H1 (cell line): ENCODE measurements at regions of chr1 and their contacts with region 1.

Region 1: DNA sequence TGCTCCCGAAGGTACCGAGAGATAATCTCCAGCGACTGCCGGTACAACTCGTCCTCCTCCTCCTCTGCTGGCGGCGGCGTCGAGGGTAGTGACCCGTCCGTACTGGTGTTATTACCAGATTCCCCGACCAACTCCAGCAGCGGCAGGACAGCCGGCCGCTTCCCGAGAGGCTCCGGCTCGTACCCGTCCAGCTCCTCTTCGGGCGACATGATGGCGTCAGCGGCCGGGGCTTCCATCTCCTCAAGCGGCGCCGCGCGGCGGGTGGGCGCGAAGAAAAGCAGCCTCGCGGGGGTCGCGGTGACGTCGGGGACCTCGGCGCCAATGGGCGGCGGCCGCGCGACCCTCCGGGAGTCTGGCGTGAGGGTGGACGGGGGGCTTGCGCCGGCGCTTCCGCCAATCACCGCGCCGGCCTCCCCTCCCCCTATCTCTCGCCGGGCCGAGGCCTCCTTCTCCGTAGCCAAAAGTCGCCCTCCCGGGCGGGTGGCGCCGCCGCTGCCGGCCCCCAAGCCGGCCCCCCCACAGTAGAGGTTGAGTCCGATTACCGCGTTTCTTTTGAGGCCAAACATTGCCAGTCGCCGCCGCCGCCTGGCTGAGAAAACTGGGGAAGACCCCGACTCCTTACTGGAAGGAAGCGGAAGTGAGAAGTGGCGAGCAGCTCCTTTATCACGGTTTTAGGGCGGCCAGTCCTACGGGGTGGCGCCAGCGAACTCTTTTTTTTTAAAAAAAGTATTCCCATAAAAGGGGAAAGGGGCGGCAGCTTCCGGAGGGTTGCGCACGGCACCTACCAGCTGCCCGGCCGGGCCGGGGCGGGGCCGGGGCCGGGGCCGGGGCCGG is at the start of gene MCL1:
- DNase-seq: peak; percentile 82 to 90
- H3K4me3 ChIP-seq: peak within 1 kb of the TSS; percentile 100
- H3K27ac ChIP-seq: peak within 1 kb of the TSS; percentile 98
- H3K4me1 ChIP-seq: peaks cover 5 to 15% (median 13%) of the 10 kb centered on the region in 4 experiments
- H3K27me3 ChIP-seq: no peaks in the 10 kb centered on the region
- CTCF ChIP-seq: no peak
- EP300 ChIP-seq: 0 out of 3 replicates have a peak, but pooled peaks of 1 of the 2 experiments have one; percentile 2
- POLR2A ChIP-seq: peak; percentile 89 to 97
- RAD21 ChIP-seq: peak in 1 of 2 experiments; percentile 15; a peak in 1 of 4 replicates
- total RNA-seq, gene MCL1: 196 and 218 TPM in 2 replicates

Region 2: DNA sequence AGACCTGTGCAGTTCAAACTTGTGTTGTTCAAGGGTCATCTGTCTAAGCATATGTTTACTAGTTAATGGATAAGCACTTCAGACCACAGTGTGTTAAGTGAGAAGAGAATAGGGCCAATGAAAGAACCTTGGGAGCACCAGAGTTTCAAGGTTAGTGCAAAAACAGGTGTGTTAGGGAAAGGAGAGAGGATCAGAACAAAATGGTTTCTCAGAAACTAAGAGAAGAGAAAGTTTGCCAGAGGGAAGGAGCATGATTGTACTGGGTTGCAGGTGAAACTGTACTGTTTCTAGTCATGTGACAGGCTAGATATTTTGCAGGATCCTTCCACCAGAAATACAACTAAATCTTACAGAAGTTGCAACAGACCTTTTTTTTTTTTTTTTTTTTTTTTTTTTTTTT is 192.0 kb before region 1 on chr1:
- CTCF ChIA-PET with region 1: no interaction called
- POLR2A ChIA-PET with region 1: no interaction called
- DNase-seq: no peak
- H3K4me3 ChIP-seq: no peak overlapping the region
- H3K27ac ChIP-seq: no peak overlapping the region
- H3K4me1 ChIP-seq: no peaks in the 10 kb centered on the region
- H3K27me3 ChIP-seq: no peaks in the 10 kb centered on the region
- CTCF ChIP-seq: no peak
- EP300 ChIP-seq: no peak
- POLR2A ChIP-seq: no peak
- RAD21 ChIP-seq: no peak

Region 3: GRCh38 chr1:150486964-150487762 is 92.0 kb before region 1 on chr1 and contains the start of gene TARS2:
- CTCF ChIA-PET with region 1: no interaction called
- POLR2A ChIA-PET with region 1: interaction called, 10 read pairs
- DNase-seq: peak; percentile 93 to 96
- H3K4me3 ChIP-seq: peak within 1 kb of the TSS; percentile 74 to 91 (median 80)
- H3K27ac ChIP-seq: peak within 1 kb of the TSS; percentile 57; the same call in 1 of the 2 replicates
- H3K4me1 ChIP-seq: peaks cover 0 to 4% (median 1%) of the 10 kb centered on the region in 4 experiments; a peak in 5 of 7 replicates
- H3K27me3 ChIP-seq: no peaks in the 10 kb centered on the region
- CTCF ChIP-seq: no peak
- EP300 ChIP-seq: no peak
- POLR2A ChIP-seq: peak; percentile 83 to 96
- RAD21 ChIP-seq: 0 out of 4 replicates have a peak, but pooled peaks of 1 of the 2 experiments have one; percentile 6
- total RNA-seq, gene TARS2: 32.7 and 39.1 TPM in 2 replicates

Region 4: GRCh38 chr1:150629115-150629928 is 50.1 kb after region 1 on chr1 and contains the start of gene ENSA:
- CTCF ChIA-PET with region 1: interaction called, 3 read pairs
- POLR2A ChIA-PET with region 1: interaction called, 1,380 read pairs
- DNase-seq: peak; percentile 94 to 96
- H3K4me3 ChIP-seq: peak within 1 kb of the TSS; percentile 72 to 94 (median 80)
- H3K27ac ChIP-seq: peak within 1 kb of the TSS; percentile 97
- H3K4me1 ChIP-seq: peaks cover 0 to 7% (median 4%) of the 10 kb centered on the region in 4 experiments; a peak in 5 of 7 replicates
- H3K27me3 ChIP-seq: no peaks in the 10 kb centered on the region
- CTCF ChIP-seq: no peak
- EP300 ChIP-seq: no peak
- POLR2A ChIP-seq: peak; percentile 62 to 66
- RAD21 ChIP-seq: no peak
- total RNA-seq, gene ENSA: 229 and 236 TPM in 2 replicates

Region 5: DNA sequence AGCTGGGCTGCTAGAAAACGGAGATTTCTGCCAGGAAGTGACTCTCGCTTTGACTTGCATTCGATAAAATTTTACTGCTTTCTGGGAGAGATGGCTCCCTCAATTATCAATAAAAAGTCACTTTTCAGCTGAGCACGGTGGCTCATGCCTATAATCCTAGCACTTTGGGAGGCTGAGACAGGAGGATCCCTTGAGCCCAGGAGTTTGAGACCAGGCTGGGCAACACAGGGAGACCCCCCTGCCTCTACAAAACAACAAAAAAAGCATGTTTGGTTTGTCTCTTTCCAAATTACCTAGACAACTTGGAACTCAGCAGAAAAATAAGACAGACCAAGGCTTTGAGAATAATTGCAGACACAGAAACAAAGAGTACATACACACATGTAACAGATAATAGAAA is 63.1 kb after region 1 on chr1:
- CTCF ChIA-PET with region 1: interaction called, 5 read pairs
- POLR2A ChIA-PET with region 1: interaction called, 17 read pairs
- DNase-seq: no peak
- H3K4me3 ChIP-seq: peak overlapping the region in 1 of 4 experiments; percentile 14; a peak in 1 of 8 replicates
- H3K27ac ChIP-seq: peak overlapping the region; percentile 71; the same call in 1 of the 2 replicates
- H3K4me1 ChIP-seq: peaks cover 1 to 8% (median 4%) of the 10 kb centered on the region in 4 experiments; a peak in 3 of 7 replicates
- H3K27me3 ChIP-seq: no peaks in the 10 kb centered on the region
- CTCF ChIP-seq: no peak
- EP300 ChIP-seq: no peak
- POLR2A ChIP-seq: no peak
- RAD21 ChIP-seq: no peak